B cell (primary cell): ENCODE measurements at regions of chr17 and their contacts with region 1.

Region 1: DNA sequence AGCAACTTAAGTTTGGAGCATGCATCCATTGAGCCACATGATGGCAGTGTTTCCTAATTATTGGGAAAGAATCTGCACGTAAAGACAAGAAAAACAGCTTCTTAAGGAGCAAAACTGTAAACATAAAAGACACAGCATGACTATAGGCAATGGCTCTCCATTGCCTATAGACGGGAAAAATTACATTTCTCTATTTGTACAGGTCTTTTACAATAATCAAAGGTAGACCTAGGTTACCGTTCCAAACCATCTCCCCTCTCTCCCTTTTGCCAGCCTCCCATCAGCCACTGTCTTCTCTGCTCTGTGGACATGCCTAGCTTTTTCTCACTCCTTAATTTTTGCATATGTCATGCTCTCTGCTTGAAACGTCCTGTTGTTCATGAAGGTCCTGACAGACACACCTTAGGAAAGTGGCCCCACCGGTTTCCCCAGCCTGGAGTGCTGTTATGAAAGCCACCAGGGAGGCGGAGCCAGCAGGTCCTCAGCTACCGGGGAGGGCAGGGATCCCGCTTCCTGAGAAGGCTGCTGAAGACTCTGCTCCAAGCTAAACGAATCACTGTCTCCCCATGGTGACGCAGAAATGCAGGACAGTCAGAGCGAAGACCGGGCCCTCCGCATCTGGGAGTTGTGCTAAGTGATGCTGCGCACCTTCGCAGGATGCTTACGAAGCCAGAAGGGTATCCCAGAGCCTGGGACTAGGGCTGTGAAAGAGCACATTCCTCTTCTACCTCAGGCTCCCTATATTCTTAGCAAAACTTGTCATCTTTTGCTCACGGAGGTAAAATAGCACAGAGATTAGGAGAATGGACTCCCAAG is 2.2 kb upstream of the SLC16A11 start:
- DNase-seq: peak; percentile 85
- ATAC-seq: peak; percentile 13
- H3K4me3 ChIP-seq: peak overlapping the region; percentile 42 to 67 (median 58)
- H3K4me3 Mint-ChIP-seq: peak overlapping the region; percentile 77
- H3K27ac ChIP-seq: peak overlapping the region; percentile 61 to 81
- H3K27ac Mint-ChIP-seq: peak overlapping the region; percentile 92
- H3K4me1 ChIP-seq: peaks cover 35 to 46% of the 10 kb centered on the region in 2 donors
- H3K4me1 Mint-ChIP-seq: peaks cover 39% of the 10 kb centered on the region
- H3K27me3 ChIP-seq: peaks cover 0 to 4% (median 0%) of the 10 kb centered on the region in 4 experiments
- H3K27me3 Mint-ChIP-seq: peaks cover 3% of the 10 kb centered on the region
- CTCF ChIP-seq: peak; percentile 82

Region 2: DNA sequence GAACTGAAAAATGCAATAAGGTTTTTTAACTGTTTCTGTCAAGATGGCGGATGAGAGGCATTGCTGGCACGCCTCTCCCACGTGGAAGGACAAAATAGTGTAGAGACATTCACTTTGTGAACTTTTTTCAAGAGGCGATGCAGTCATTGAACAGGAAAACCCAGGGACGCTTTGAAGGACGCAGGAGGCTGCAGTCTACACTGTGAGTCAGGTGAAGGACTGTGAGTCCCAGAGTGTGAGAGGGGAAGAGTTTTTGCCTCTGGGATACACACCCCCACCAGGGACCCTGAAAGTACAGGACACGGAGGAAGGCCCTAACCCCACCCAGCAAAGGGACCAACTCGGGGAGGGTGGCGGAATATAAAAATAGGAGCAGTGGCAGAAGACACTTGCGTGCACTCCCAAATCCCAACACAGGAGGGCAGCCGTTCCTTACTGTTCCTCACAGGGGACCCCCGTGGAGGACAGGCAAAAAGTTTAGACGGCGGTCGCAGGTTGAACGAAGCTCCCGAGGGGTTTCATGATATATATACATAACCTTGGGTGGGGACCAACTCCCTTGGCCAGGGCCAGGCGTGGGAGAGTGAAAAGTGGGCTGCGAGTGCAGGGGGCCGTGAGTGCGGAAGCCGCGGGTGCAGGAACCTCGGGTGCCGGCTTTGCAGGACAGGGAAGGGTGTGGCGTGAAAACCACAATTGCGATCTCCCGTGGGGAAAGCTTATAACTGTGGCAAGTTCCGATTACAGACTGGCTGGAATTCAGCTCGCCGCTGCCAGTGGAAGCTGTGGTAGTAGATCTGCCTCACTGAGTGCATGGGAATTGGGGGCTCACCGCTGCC is 132.3 kb before region 1 on chr17:
- CTCF ChIA-PET with region 1: interaction called, 15 read pairs
- POLR2A ChIA-PET with region 1: interaction called, 3 read pairs
- intact Hi-C with region 1: loop called (anchors 2 kb)
- DNase-seq: peak; percentile 83
- ATAC-seq: peak; percentile 92
- H3K4me3 ChIP-seq: peak overlapping the region in 4 of 5 experiments; percentile 32 to 49 (median 45)
- H3K4me3 Mint-ChIP-seq: peak overlapping the region; percentile 89
- H3K27ac ChIP-seq: no peak overlapping the region
- H3K27ac Mint-ChIP-seq: no peak overlapping the region
- H3K4me1 ChIP-seq: peaks cover 5 to 11% of the 10 kb centered on the region in 2 donors
- H3K4me1 Mint-ChIP-seq: peaks cover 14% of the 10 kb centered on the region
- H3K27me3 ChIP-seq: peaks cover 0 to 10% (median 4%) of the 10 kb centered on the region in 4 experiments
- H3K27me3 Mint-ChIP-seq: peaks cover 18% of the 10 kb centered on the region
- CTCF ChIP-seq: peak; percentile 85

Region 3: GRCh38 chr17:7060165-7060891 is 14.2 kb after region 1 on chr17:
- CTCF ChIA-PET with region 1: interaction called, 6 read pairs
- POLR2A ChIA-PET with region 1: interaction called, 10 read pairs
- intact Hi-C with region 1: no loop called
- DNase-seq: no peak
- ATAC-seq: no peak
- H3K4me3 ChIP-seq: no peak overlapping the region
- H3K4me3 Mint-ChIP-seq: no peak overlapping the region
- H3K27ac ChIP-seq: no peak overlapping the region
- H3K27ac Mint-ChIP-seq: peak overlapping the region; percentile 56
- H3K4me1 ChIP-seq: no peaks in the 10 kb centered on the region
- H3K4me1 Mint-ChIP-seq: no peaks in the 10 kb centered on the region
- H3K27me3 ChIP-seq: peaks cover 0 to 10% (median 3%) of the 10 kb centered on the region in 4 experiments
- H3K27me3 Mint-ChIP-seq: peaks cover 27% of the 10 kb centered on the region
- CTCF ChIP-seq: no peak

Region 4: DNA sequence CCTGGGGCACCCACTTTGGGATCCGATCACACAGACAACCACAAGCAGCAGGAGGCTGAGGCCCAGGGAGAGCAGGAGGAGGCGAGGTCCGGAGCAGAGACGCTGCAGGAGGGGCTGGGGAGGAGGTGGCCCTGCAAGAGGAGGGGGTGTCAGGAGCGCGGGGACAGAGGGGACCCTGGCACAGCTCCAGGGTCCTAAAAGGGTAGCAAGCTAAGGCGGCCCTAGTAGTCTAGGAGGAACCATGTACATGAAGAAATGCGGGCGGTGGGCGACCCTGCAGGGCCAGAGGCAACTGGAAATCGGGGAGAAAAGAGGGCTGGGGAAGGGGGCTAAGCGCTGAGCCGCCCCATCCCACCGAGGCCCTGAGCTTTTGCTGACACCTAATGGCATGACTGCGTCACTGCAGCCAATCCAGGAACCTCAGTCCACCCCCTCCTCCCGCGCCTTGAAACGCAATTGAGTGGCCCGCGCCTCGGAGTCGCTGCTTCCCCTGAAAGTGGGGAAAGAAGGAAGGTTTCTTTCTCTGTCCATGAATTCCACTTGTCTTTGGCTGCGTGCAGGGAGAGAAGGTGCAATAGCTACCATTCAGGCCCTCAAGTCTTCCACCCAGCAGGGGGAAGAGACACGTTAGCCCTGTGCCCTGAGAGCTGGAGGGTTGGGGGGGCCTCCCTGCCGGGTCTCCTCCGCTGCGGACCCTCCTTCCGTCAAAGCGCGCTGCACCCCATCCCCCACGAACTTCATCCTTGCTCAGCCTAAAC is 131.3 kb after region 1 on chr17:
- CTCF ChIA-PET with region 1: interaction called, 22 read pairs
- POLR2A ChIA-PET with region 1: no interaction called
- intact Hi-C with region 1: no loop called
- DNase-seq: peak; percentile 80
- ATAC-seq: peak; percentile 85
- H3K4me3 ChIP-seq: peak overlapping the region in 3 of 5 experiments; percentile 30 to 31 (median 31)
- H3K4me3 Mint-ChIP-seq: peak overlapping the region; percentile 74
- H3K27ac ChIP-seq: no peak overlapping the region
- H3K27ac Mint-ChIP-seq: no peak overlapping the region
- H3K4me1 ChIP-seq: peaks cover 24 to 39% of the 10 kb centered on the region in 2 donors
- H3K4me1 Mint-ChIP-seq: peaks cover 13% of the 10 kb centered on the region
- H3K27me3 ChIP-seq: peaks cover 0 to 54% (median 40%) of the 10 kb centered on the region in 4 experiments
- H3K27me3 Mint-ChIP-seq: peaks cover 12% of the 10 kb centered on the region
- CTCF ChIP-seq: peak; percentile 91

Region 5: DNA sequence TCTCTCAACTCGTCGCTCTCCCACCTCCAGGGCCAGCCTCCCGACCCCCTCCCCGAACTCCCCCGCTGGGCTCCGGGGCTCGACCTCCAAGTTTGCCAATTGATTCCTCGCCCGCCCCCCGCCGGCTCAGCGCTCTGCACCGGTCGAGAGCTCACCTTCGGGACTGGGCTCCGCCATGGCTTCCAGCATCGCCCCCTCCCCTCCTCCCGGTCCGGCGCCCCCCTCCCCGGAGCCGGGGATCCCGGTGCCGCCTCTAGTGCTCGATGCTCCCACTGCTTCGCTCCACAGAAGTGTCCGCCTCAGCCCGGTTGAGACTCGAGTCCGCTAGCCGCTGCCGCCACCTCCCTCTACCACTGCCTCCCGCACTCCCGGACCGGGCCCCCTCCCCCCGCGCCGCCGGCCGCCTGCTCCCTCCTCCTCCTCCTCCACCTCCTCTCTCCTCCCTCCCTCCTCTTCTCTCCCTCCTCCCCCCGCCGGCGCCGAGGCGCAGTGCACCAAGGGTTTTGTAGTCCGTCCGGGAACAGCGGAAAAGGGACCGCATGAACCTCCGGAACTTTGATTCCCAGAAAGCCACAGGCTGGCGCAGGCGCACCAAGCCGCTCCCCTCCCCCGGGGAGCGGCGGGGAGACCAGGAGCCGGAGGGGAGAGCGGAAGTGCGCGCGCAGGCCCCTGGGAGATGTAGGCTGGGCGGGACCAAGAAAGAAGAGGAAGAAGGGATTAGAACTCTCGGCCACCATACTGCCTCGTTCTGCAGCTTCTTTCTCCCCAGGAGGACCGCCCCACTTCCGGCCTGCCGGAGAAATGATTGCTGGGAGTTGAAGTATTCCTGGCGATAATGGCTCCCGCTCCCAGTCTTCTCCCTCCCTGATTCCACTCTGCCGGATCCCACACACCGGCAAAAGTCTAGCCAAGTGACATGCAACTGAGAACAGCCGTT is 193.2 kb after region 1 on chr17 and contains the start of gene PHF23:
- CTCF ChIA-PET with region 1: interaction called, 11 read pairs
- POLR2A ChIA-PET with region 1: interaction called, 6 read pairs
- intact Hi-C with region 1: no loop called
- DNase-seq: peak; percentile 98
- ATAC-seq: peak; percentile 64
- H3K4me3 ChIP-seq: peak within 1 kb of the TSS; percentile 74 to 97 (median 75)
- H3K4me3 Mint-ChIP-seq: peak within 1 kb of the TSS; percentile 98
- H3K27ac ChIP-seq: peak within 1 kb of the TSS; percentile 55 to 97
- H3K27ac Mint-ChIP-seq: peak within 1 kb of the TSS; percentile 100
- H3K4me1 ChIP-seq: peaks cover 42 to 49% of the 10 kb centered on the region in 2 donors
- H3K4me1 Mint-ChIP-seq: peaks cover 61% of the 10 kb centered on the region
- H3K27me3 ChIP-seq: no peaks in the 10 kb centered on the region
- H3K27me3 Mint-ChIP-seq: no peaks in the 10 kb centered on the region
- CTCF ChIP-seq: no peak
- total RNA-seq, gene PHF23: 42.3 and 45.8 TPM in 2 replicates

Region 6: DNA sequence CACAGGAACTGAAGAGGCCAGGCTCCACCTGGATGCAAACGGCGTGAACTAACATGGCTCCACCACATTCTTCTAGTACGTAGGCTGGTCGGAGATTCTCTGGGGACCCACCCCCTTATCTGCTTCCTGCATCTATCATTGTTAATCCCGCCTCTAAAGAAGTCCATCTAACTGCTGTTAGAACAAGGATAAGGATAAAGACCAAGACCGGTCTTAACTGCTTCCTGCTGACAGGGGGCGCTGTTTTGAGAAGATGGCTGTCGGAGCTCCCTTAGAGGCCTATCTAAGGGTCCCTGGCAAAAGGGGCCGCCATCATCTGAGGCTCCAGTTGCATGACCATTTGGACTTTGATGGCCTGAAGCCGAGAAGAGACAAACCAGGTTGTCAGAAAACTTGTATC is 476.9 kb after region 1 on chr17:
- CTCF ChIA-PET with region 1: no interaction called
- POLR2A ChIA-PET with region 1: no interaction called
- intact Hi-C with region 1: no loop called
- DNase-seq: peak; percentile 68
- ATAC-seq: peak; percentile 51
- H3K4me3 ChIP-seq: no peak overlapping the region
- H3K4me3 Mint-ChIP-seq: no peak overlapping the region
- H3K27ac ChIP-seq: no peak overlapping the region
- H3K27ac Mint-ChIP-seq: no peak overlapping the region
- H3K4me1 ChIP-seq: no peaks in the 10 kb centered on the region
- H3K4me1 Mint-ChIP-seq: no peaks in the 10 kb centered on the region
- H3K27me3 ChIP-seq: no peaks in the 10 kb centered on the region
- H3K27me3 Mint-ChIP-seq: no peaks in the 10 kb centered on the region
- CTCF ChIP-seq: peak; percentile 71

Region 7: GRCh38 chr17:7583253-7584109 is 537.4 kb after region 1 on chr17 and contains the start of gene MPDU1:
- CTCF ChIA-PET with region 1: interaction called, 10 read pairs
- POLR2A ChIA-PET with region 1: no interaction called
- intact Hi-C with region 1: loop called (anchors 10 kb)
- DNase-seq: peak; percentile 98
- ATAC-seq: peak; percentile 78
- H3K4me3 ChIP-seq: peak within 1 kb of the TSS; percentile 77 to 96 (median 86)
- H3K4me3 Mint-ChIP-seq: peak within 1 kb of the TSS; percentile 100
- H3K27ac ChIP-seq: peak within 1 kb of the TSS; percentile 91 to 95
- H3K27ac Mint-ChIP-seq: peak within 1 kb of the TSS; percentile 100
- H3K4me1 ChIP-seq: peaks cover 48 to 68% of the 10 kb centered on the region in 2 donors
- H3K4me1 Mint-ChIP-seq: peaks cover 57% of the 10 kb centered on the region
- H3K27me3 ChIP-seq: no peaks in the 10 kb centered on the region
- H3K27me3 Mint-ChIP-seq: no peaks in the 10 kb centered on the region
- CTCF ChIP-seq: no peak
- total RNA-seq, gene MPDU1: 29.7 and 31.7 TPM in 2 replicates